ENCODE measurements at regions of chr7 and their contacts with region 1.

Region 1: DNA sequence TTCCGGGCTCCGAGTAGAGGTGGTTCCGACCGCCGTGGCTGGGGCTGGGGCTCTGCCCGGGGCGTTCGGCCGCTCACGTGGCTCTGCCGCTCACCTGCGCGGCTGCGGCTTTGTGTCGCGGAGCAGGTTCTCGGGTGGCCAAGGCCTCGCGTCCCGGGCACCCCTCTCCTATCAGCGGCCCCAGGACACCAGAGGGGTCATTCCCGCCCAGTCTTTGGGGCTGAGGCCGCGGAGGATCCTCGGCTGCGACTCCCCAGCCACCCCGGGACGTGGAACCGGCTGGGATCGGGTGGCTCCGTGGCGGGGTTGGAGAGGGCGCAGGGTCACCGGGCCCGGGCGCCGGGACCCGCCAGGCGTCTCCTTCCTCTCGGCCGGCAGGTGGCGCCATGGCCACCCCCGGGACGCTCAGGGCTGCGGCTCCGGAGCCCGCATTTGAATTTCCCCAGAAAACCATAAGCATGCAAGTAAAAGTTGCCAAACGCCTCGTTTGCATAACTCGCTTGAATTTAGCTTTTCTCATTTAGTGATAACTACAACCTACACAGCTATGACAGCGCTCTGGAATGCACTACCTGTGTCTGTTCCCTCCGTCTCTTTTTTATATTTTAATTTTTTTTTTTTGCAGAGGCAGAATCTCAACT is 1.2 kb downstream of the COL26A1 start:
- DNase-seq: peak; percentile 63 to 78
- ATAC-seq: peak; percentile 84 to 97 (median 90)
- H3K4me3 ChIP-seq: peak overlapping the region; percentile 69
- H3K27ac ChIP-seq: no peak overlapping the region
- H3K4me1 ChIP-seq: no peaks in the 10 kb centered on the region
- H3K27me3 ChIP-seq: peaks cover 0 to 32% (median 9%) of the 10 kb centered on the region in 3 donors
- CTCF ChIP-seq: peak; percentile 88

Region 2: DNA sequence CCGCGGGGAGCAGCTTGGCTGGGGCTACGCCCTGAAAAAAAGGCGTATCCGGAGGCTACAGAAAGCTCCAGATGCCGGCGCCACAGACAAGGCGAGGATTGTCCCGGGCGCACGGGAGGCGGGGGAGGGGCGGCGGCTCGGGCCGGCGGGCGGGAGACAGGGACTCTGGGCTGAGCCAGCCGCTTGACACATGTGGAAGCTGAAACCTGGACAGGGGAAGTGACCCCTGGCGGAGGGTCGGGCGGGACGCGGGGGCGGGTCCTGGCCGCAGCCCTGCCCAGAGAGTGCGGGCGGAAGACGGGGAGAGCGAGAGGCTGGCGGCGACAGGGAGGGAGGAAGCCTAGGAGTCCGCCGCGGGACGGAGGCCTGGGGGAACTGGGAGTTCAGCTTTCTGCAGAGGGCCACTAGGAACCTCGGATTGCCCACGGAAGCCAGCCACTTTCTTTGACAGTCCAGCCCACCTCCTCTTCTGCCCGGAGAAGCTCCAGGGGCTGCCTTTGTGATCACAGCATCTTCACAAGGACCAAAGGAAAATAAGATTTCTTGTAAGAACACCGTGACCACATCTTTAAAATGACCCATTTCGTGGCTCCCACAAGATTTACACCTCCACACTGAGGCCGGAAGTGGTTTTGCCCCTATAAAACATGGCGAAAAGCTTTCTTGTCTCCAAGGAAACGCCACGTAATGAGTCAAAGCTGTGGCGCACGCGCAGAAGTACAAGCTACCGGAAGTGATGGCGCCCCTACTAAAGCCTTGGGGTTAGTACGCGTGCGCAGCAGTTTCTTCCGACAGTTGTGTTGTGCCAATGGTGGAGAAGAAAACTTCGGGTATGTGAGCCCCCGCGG is 146.2 kb before region 1 on chr7 and contains the starts of genes PLOD3 and ZNHIT1:
- intact Hi-C with region 1: no loop called
- DNase-seq: peak; percentile 98 to 99
- ATAC-seq: peak; percentile 93 to 94 (median 94)
- H3K4me3 ChIP-seq: peak within 1 kb of the TSS; percentile 97
- H3K27ac ChIP-seq: peak within 1 kb of the TSS; percentile 88
- H3K4me1 ChIP-seq: peaks cover 20% of the 10 kb centered on the region
- H3K27me3 ChIP-seq: no peaks in the 10 kb centered on the region
- CTCF ChIP-seq: no peak
- total RNA-seq, gene PLOD3: 18.5 to 25.4 (median 20.4) TPM
- total RNA-seq, gene ZNHIT1: 40.8 to 58.1 (median 48.1) TPM

Region 3: GRCh38 chr7:102272075-102272917 is 908.4 kb after region 1 on chr7:
- intact Hi-C with region 1: loop called in 1 of 2 experiments (anchors 5 kb)
- DNase-seq: peak; percentile 83 to 91
- ATAC-seq: peak; percentile 93 to 97 (median 96)
- H3K4me3 ChIP-seq: no peak overlapping the region
- H3K27ac ChIP-seq: no peak overlapping the region
- H3K4me1 ChIP-seq: no peaks in the 10 kb centered on the region
- H3K27me3 ChIP-seq: no peaks in the 10 kb centered on the region
- CTCF ChIP-seq: peak; percentile 95

Measured in psoas muscle (tissue), 8 donors.